Head of caudate nucleus (tissue), 42 donors: ENCODE measurements at regions of chr18 and their contacts with region 1.

Region 1: GRCh38 chr18:13973056-13973575 is 57.8 kb upstream of the MC2R start:
- DNase-seq: peak in 6 of 42 donors; percentile 2 to 65 (median 18)

Region 2: DNA sequence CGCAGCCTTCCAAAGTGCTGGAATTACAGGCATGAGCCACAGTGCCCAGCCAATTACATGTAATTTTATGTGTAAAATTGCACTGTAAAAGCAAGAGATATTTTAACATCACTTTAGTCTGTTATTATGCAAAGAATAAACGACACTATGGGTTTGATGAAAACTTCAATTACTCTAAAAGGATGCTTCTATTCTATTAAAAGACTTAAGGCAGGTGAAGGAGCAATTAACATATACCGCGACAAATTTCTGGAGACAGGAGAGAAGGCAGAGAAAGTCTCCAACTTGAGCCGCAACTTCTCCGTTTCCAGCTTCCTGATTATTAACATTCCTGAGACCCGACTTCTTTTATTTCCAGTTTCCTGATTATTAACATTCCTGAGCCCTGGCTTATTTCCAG is 300.5 kb before region 1 on chr18:
- intact Hi-C with region 1: no loop called
- DNase-seq: no peak

Region 3: GRCh38 chr18:13915995-13916431 is 57.1 kb before region 1 on chr18:
- intact Hi-C with region 1: no loop called
- DNase-seq: peak in 1 of 42 donors; percentile 7

Region 4: GRCh38 chr18:14053661-14054060 is 80.5 kb after region 1 on chr18:
- intact Hi-C with region 1: loop called (anchors 10 kb)
- DNase-seq: no peak